ENCODE measurements at regions of chr16 and their contacts with region 1.

Region 1: GRCh38 chr16:11742539-11743307 is at the start of gene TXNDC11:
- DNase-seq: peak; percentile 100
- ATAC-seq: peak; percentile 95
- H3K4me3 ChIP-seq: peak within 1 kb of the TSS; percentile 84
- H3K4me1 ChIP-seq: peaks cover 34% of the 10 kb centered on the region
- CTCF ChIP-seq: no peak
- total RNA-seq, gene TXNDC11: 52.3 to 71.9 (median 60.3) TPM

Region 2: GRCh38 chr16:11797166-11797956 is 54.6 kb after region 1 on chr16 and contains the start of gene ZC3H7A:
- intact Hi-C with region 1: loop called in 1 of 2 experiments (anchors 5 kb)
- DNase-seq: peak; percentile 96 to 99 (median 97)
- ATAC-seq: peak; percentile 96
- H3K4me3 ChIP-seq: peak within 1 kb of the TSS; percentile 80
- H3K4me1 ChIP-seq: peaks cover 37% of the 10 kb centered on the region
- CTCF ChIP-seq: peak; percentile 98
- total RNA-seq, gene ZC3H7A: 42.4 to 61.2 (median 59.0) TPM

Region 3: GRCh38 chr16:11896777-11897176 is 154.1 kb after region 1 on chr16:
- intact Hi-C with region 1: no loop called
- DNase-seq: no peak
- ATAC-seq: no peak
- H3K4me3 ChIP-seq: no peak overlapping the region
- H3K4me1 ChIP-seq: no peaks in the 10 kb centered on the region
- CTCF ChIP-seq: no peak